Thyroid gland (tissue), 4 donors: ENCODE measurements at regions of chr1 and their contacts with region 1.

Region 1: GRCh38 chr1:32714277-32714676 is 11.7 kb upstream of the SYNC start:
- DNase-seq: no peak
- H3K4me3 ChIP-seq: no peak overlapping the region
- H3K27ac ChIP-seq: no peak overlapping the region
- H3K4me1 ChIP-seq: peaks cover 10 to 22% of the 10 kb centered on the region in 2 donors
- H3K27me3 ChIP-seq: no peaks in the 10 kb centered on the region
- CTCF ChIP-seq: no peak
- POLR2A ChIP-seq: no peak

Region 2: DNA sequence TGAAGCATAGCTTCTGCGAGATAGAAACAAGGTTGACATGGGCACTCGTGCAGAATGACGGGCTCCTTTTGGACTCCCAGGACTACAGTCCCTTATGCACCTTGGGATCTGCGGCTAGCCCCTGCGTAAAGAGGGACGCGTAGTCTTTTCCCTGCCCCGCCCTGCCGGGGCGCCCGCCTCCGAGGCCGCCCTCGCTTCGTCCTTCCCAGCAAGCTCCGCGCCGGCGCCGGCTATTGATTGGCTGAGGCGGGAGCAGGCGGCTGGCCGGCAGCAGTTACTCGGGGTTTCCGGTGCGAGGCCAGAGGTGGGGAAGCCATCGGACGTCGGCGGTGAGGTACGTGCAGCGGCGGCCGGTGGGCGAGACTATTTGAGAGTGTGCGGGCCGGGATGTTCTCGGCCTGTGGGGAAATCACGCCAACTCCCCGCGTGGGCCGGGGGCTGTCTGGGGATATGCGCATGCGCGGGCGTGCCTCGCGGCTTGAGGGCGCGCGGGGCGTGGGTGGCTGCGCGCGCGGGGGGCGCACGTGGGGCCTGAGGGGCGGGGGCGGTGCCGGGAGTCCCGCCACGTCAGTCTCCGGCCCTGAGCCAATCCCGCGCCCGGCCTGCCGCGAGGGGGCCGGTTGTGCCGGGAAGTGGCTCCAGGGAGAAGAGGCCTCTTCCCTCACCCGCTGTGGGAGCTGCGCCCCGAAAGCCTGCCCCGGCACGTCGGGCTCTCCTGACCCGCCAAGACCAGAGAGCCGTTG is 534.7 kb before region 1 on chr1 and contains the start of gene TXLNA:
- intact Hi-C with region 1: no loop called
- DNase-seq: peak; percentile 94 to 96
- H3K4me3 ChIP-seq: peak within 1 kb of the TSS; percentile 2 to 49 (median 21)
- H3K27ac ChIP-seq: peak within 1 kb of the TSS; percentile 81 to 94 (median 87)
- H3K4me1 ChIP-seq: peaks cover 18 to 38% of the 10 kb centered on the region in 2 donors
- H3K27me3 ChIP-seq: no peaks in the 10 kb centered on the region
- CTCF ChIP-seq: peak in 1 of 6 experiments; percentile 26
- POLR2A ChIP-seq: peak in 1 of 2 donors; percentile 70
- total RNA-seq, gene TXLNA: 47.7 to 69.4 (median 60.6) TPM

Region 3: GRCh38 chr1:32500387-32501209 is 213.7 kb before region 1 on chr1:
- intact Hi-C with region 1: no loop called
- DNase-seq: peak; percentile 61 to 64
- H3K4me3 ChIP-seq: peak overlapping the region; percentile 53 to 70 (median 63)
- H3K27ac ChIP-seq: peak overlapping the region; percentile 84 to 92 (median 88)
- H3K4me1 ChIP-seq: peaks cover 7 to 17% of the 10 kb centered on the region in 2 donors
- H3K27me3 ChIP-seq: no peaks in the 10 kb centered on the region
- CTCF ChIP-seq: peak in 3 of 6 experiments; percentile 35 to 49 (median 46)
- POLR2A ChIP-seq: peak in 1 of 2 donors; percentile 58

Region 4: DNA sequence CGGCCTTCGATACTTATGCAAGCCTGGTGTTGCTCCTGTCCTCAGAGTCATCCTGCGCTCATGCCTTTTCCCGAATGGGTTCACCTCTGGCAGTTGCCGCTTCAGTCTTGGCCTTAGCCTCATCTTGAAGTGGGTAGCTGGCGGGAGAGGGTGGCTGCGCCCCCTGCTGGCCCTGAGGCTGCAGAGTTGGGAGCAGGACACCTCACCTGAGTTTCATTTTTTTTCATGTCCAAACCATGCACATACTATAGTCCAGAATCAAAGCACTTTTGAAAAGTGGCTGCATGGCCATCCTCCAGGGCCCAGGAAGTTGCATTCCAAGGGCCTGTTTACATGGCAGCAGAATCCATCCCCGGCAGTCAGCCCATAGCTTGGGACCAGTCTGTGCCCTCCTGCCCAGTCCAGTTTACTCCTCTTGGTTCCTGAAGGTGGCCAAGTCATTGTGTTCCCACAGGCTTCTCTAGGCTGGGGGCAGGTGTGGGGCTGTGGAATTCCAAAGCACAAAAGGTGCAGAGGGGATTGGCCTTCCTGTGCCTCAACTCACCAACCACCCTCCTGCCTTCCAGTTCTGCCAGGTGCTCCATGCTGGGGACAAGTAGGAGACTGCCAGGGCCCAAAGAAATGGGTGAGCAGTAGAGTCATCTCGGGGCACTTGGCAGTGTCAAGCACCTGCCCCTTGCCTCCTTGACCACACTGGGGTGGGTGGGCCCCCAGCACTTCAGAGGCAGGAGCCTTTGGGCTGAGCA is 58.9 kb after region 1 on chr1:
- intact Hi-C with region 1: loop called (anchors 5 kb)
- DNase-seq: peak; percentile 89 to 91
- H3K4me3 ChIP-seq: no peak overlapping the region
- H3K27ac ChIP-seq: peak overlapping the region in 1 of 3 donors; percentile 49
- H3K4me1 ChIP-seq: peaks cover 0 to 11% of the 10 kb centered on the region in 2 donors
- H3K27me3 ChIP-seq: no peaks in the 10 kb centered on the region
- CTCF ChIP-seq: peak; percentile 72 to 97 (median 90)
- POLR2A ChIP-seq: no peak

Region 5: DNA sequence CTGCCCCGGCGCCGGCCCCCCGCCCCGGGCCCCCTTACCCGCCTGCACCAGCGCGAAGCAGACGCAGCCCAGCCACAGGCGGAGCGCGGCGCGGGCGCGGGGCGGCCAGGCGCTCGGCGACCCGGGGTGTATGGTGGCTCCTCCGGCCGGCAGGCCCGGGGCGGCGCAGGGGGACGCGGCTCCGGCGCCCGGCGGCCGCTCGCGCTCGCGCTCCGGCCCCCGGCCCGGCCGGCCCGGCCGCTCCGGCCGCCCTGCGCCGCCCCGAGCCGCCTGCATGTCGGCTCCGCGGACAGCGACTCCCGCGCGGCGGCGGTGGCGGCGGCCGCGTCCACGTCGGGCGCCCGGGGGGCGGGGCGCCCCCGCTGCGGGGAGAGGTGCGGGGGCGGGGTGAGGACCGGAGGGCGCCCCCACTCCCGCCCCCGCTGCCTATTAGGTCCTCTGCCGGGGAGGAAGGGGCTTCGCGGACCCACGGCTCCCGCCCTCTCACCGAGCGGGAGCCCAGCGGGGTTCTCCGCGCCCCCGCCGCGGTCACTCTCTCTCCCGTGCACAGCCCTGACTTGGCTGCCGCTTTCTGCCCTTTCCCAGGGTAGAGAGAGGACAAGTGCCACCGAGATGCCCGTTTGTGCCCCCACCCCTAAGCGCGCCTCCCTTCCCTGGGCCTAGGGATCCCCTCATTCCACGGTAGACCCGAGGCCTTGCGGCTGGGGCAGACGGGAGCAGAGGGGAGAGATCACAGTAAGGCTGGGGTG is 156.5 kb after region 1 on chr1 and contains the start of gene FNDC5:
- intact Hi-C with region 1: loop called (anchors 5 kb)
- DNase-seq: peak; percentile 41 to 59
- H3K4me3 ChIP-seq: peak within 1 kb of the TSS in 1 of 3 donors; percentile 31
- H3K27ac ChIP-seq: no peak within 1 kb of the TSS
- H3K4me1 ChIP-seq: peaks cover 0 to 26% of the 10 kb centered on the region in 2 donors
- H3K27me3 ChIP-seq: no peaks in the 10 kb centered on the region
- CTCF ChIP-seq: peak in 1 of 6 experiments; percentile 10
- POLR2A ChIP-seq: no peak
- total RNA-seq, gene FNDC5: 0.27 to 4.0 (median 1.5) TPM

Region 6: GRCh38 chr1:33080885-33081553 is 366.7 kb after region 1 on chr1 and contains the start of gene AZIN2:
- intact Hi-C with region 1: loop called (anchors 5 kb)
- DNase-seq: peak; percentile 98
- H3K4me3 ChIP-seq: peak within 1 kb of the TSS; percentile 38 to 70 (median 68)
- H3K27ac ChIP-seq: no peak within 1 kb of the TSS
- H3K4me1 ChIP-seq: peaks cover 11 to 18% of the 10 kb centered on the region in 2 donors
- H3K27me3 ChIP-seq: no peaks in the 10 kb centered on the region
- CTCF ChIP-seq: peak in 1 of 6 experiments; percentile 8
- POLR2A ChIP-seq: peak; percentile 9 to 89
- total RNA-seq, gene AZIN2: 4.9 to 13.6 (median 5.3) TPM